Cardiac septum (tissue), 1 donor: ENCODE measurements at regions of chr2 and their contacts with region 1.

Region 1: GRCh38 chr2:231604685-231605606 is 12.3 kb downstream of the TEX44 start:
- DNase-seq: peak; percentile 100

Region 2: GRCh38 chr2:231514103-231514950 is 90.6 kb before region 1 on chr2:
- intact Hi-C with region 1: loop called (anchors 5 kb)
- DNase-seq: peak; percentile 98

Region 3: DNA sequence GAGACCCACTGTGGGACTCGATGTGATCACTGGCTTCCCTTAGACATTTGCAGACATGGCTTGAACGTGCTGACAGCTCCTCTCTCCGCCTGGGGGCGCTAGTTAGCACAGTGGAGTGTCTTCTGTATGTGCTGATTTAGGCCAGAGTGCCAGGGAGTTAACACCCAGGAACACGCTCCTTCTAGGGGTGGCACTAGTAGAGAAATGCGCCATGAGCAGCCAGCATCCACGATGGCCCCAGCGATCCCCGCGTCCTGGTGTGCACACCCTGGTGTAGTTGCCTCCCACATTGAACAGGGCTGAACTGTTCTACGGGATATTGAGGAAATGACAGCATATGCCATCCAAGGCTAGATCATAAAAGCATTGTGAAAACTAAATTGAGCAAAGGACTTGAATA is 63.3 kb before region 1 on chr2:
- intact Hi-C with region 1: no loop called
- DNase-seq: no peak

Region 4: DNA sequence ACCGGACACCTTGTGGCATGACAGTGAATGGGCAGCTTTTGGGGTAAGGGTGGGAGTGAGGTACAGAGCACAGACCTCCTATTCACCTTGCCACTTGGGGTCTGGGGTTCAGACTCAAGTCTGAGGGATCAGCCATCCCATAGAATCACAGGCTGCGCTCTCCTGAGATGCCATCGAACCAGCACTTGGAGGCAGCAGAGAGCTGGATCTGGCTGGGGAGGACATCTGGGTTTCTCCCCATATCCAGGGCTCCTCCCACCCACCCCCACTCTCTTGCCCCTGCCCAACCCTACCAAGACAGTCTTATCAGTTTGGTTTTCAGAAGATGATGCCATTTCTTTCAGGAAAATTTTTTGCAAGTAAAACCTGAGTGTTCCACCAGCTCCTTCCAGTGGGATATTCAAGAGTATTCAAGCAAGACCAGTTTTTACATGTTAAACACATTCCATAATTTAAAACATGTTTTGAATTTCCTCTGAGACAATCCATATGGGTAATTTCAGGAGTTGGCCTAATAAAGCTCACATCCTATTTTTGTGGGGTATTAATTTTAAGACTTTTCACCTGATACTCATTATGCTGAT is 41.5 kb before region 1 on chr2:
- intact Hi-C with region 1: loop called (anchors 1 kb)
- DNase-seq: no peak

Region 5: GRCh38 chr2:231655897-231656296 is 51.0 kb after region 1 on chr2:
- intact Hi-C with region 1: no loop called
- DNase-seq: no peak

Region 6: DNA sequence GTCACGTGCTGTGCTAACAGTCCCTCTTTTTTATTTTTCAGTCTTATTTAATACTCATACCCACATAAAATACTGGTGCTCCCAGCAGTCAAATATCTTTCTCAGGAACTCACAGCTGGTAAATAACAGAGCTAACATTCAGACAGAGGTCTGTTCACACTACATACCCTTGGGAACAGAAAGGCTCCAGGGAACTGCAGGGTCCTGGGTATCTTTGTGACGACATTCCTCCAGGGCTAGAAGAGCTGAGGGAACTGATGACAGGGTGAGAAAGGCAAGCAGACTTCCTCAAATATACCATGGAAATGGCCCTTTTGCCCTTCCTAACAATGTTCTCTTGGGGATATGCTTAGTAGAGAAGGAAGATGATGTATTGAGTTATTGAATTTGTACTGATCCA is 156.8 kb after region 1 on chr2:
- intact Hi-C with region 1: no loop called
- DNase-seq: no peak

Region 7: GRCh38 chr2:232085179-232085578 is 480.2 kb after region 1 on chr2:
- intact Hi-C with region 1: no loop called
- DNase-seq: no peak